A673 (cell line): ENCODE measurements at regions of chr13 and their contacts with region 1.

Region 1: DNA sequence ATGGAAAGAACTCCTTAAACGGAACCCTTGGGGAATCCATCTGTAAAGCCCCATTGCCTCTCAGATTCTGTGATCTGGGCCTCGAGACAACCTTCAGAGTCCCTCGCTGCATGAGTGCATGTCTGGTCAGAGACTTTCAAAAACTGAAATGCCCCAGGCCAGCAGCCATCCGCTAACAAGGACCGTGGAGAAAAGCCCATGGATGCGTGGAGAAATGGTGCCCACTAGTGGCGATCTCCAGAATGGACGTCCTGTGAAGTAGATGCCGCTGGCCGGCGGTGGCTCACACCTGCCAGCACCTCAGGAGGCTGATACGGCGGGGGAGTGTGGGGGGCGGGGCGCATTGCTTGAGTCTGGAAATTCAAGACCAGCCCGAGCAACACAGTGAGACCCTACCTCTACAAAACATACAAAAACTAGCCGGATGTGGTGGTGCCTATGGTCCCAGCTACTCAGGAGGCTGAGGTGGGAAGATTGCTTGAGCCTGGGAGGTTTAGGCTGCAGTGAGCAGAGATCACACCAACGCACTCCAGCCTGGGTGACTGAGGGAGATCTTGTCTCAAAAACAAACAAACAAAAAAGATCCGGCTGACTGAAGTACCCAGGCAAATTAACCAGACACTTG is 7.9 kb upstream of the CDC16 start:
- DNase-seq: peak; percentile 78
- H3K4me3 ChIP-seq: no peak overlapping the region
- H3K27ac ChIP-seq: no peak overlapping the region
- H3K4me1 ChIP-seq: peaks cover 9% of the 10 kb centered on the region
- H3K27me3 ChIP-seq: no peaks in the 10 kb centered on the region
- CTCF ChIP-seq: peak; percentile 92

Region 2: DNA sequence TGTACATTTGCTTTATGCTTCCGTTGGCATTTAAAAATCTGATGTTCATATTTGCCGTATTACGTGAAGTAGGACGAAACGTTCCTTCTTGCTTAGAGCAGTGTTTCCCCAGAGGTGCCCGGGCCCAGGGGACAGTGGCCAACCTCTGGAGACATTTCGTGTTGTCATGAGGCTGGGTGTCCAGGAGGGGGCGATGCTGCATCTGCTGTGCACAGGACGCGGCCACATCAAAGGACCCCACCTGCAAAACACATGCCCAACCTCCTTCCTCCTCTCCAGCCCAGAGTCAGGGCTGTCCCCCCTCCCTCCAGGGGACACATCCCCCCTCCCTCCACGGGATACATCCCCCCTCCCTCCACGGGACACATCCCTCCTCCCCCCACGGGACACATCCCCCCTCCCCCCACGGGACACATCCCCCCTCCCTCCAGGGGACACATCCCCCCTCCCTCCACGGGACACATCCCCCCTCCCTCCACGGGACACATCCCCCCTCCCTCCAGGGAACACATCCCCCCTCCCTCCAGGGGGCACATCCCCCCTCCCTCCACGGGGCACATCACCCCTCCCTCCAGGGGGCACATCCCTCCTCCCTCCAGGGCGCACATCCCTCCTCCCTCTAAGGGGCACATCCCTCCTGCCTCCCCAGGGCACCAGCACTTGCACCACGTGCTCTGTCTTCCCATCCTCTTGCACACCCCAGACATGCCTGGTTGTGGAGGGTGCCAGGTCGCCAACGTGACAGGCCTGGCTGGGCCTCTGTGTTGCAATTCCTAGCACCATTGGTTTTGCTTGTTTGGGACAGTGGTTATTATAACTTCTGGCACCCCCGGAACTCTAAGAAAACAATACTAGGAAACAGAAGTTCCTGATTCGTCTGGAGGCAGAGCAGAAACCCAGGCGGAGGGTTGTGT is 409.6 kb before region 1 on chr13:
- CTCF ChIA-PET with region 1: no interaction called
- POLR2A ChIA-PET with region 1: no interaction called
- intact Hi-C with region 1: loop called (anchors 2 kb)
- DNase-seq: peak; percentile 84
- H3K4me3 ChIP-seq: no peak overlapping the region
- H3K27ac ChIP-seq: no peak overlapping the region
- H3K4me1 ChIP-seq: peaks cover 8% of the 10 kb centered on the region
- H3K27me3 ChIP-seq: no peaks in the 10 kb centered on the region
- CTCF ChIP-seq: peak; percentile 78

Region 3: GRCh38 chr13:114132419-114133121 is 94.2 kb before region 1 on chr13 and contains the start of gene RASA3:
- CTCF ChIA-PET with region 1: no interaction called
- POLR2A ChIA-PET with region 1: no interaction called
- intact Hi-C with region 1: loop called (anchors 5 kb)
- DNase-seq: peak; percentile 82
- H3K4me3 ChIP-seq: peak within 1 kb of the TSS; percentile 90
- H3K27ac ChIP-seq: peak within 1 kb of the TSS; percentile 94
- H3K4me1 ChIP-seq: peaks cover 33% of the 10 kb centered on the region
- H3K27me3 ChIP-seq: no peaks in the 10 kb centered on the region
- CTCF ChIP-seq: no peak
- total RNA-seq, gene RASA3: 22.1 and 24.1 TPM in 2 replicates